Naive thymus-derived CD4-positive, alpha-beta T cell (primary cell): ENCODE measurements at regions of chrX and their contacts with region 1.

Region 1: GRCh38 chrX:43958529-43958928 is 14.7 kb downstream of the NDP start:
- DNase-seq: peak in 7 of 9 donors; percentile 18 to 58 (median 36)
- ATAC-seq: peak; percentile 74
- H3K4me3 ChIP-seq: no peak overlapping the region
- H3K4me3 Mint-ChIP-seq: peak overlapping the region in 1 of 10 donors; percentile 44
- H3K27ac ChIP-seq: no peak overlapping the region
- H3K27ac Mint-ChIP-seq: peak overlapping the region in 3 of 9 donors; percentile 6 to 29 (median 24)
- H3K4me1 ChIP-seq: no peaks in the 10 kb centered on the region
- H3K4me1 Mint-ChIP-seq: peaks cover 0 to 6% (median 5%) of the 10 kb centered on the region in 7 donors
- H3K27me3 ChIP-seq: no peaks in the 10 kb centered on the region
- H3K27me3 Mint-ChIP-seq: peaks cover 0 to 5% (median 0%) of the 10 kb centered on the region in 5 donors

Region 2: DNA sequence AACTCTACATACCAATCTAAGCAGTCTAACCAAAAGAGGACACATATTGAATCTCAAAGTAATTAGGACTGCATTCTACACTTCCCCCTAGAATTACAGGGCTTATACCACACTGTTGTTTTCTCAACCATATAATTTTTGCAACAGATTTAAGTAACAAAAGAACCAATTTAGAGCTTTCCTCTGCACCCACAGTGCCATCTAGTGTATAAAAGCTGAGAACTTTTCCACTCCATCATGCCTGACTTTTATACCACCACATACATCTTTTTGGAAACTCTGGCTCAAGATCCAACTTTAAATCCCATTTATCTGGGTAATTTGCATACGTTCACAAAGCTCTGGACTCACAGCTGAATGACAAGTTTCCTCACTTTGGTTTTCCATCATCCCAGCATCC is 285.5 kb after region 1 on chrX:
- CTCF ChIA-PET with region 1: interaction called, 17 read pairs
- POLR2A ChIA-PET with region 1: interaction called, 4 read pairs
- intact Hi-C with region 1: loop called (anchors 1 kb)
- DNase-seq: peak in 6 of 9 donors; percentile 8 to 51 (median 40)
- ATAC-seq: peak; percentile 46
- H3K4me3 ChIP-seq: no peak overlapping the region
- H3K4me3 Mint-ChIP-seq: peak overlapping the region in 2 of 10 donors; percentile 0 to 6
- H3K27ac ChIP-seq: no peak overlapping the region
- H3K27ac Mint-ChIP-seq: peak overlapping the region in 8 of 9 donors; percentile 5 to 79 (median 52)
- H3K4me1 ChIP-seq: peaks cover 5 to 22% of the 10 kb centered on the region in 2 donors
- H3K4me1 Mint-ChIP-seq: peaks cover 10 to 46% (median 30%) of the 10 kb centered on the region in 7 donors
- H3K27me3 ChIP-seq: no peaks in the 10 kb centered on the region
- H3K27me3 Mint-ChIP-seq: no peaks in the 10 kb centered on the region

Region 3: GRCh38 chrX:44542567-44543325 is 584.2 kb after region 1 on chrX and contains the start of gene FUNDC1:
- CTCF ChIA-PET with region 1: no interaction called
- POLR2A ChIA-PET with region 1: no interaction called
- intact Hi-C with region 1: loop called (anchors 1 kb)
- DNase-seq: peak; percentile 75 to 93 (median 89)
- ATAC-seq: peak; percentile 98
- H3K4me3 ChIP-seq: peak within 1 kb of the TSS; percentile 79
- H3K4me3 Mint-ChIP-seq: peak within 1 kb of the TSS; percentile 89 to 97 (median 93)
- H3K27ac ChIP-seq: peak within 1 kb of the TSS; percentile 92
- H3K27ac Mint-ChIP-seq: peak within 1 kb of the TSS; percentile 86 to 97 (median 93)
- H3K4me1 ChIP-seq: peaks cover 5 to 12% of the 10 kb centered on the region in 2 donors
- H3K4me1 Mint-ChIP-seq: peaks cover 12 to 54% (median 37%) of the 10 kb centered on the region in 7 donors
- H3K27me3 ChIP-seq: no peaks in the 10 kb centered on the region
- H3K27me3 Mint-ChIP-seq: no peaks in the 10 kb centered on the region
- total RNA-seq, gene FUNDC1: 5.2 to 10.1 (median 9.8) TPM

Region 4: DNA sequence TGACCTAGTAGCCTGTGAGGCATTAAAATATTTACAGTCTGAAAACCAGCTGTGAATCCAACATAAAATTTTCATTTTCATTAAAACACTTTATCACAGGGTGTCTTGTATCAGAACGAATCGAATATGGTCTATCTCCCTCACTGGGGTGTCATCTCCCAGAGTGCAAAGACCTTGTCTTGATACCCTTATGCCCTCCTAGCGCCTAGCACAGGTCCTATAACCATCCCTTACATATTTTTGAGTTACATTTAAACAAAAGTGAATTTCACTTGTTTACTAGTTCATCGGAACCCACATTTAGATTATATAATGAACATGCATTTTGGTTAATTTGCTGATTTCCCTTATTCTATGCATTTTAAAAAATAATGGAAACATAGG is 1228.1 kb after region 1 on chrX:
- CTCF ChIA-PET with region 1: interaction called, 3 read pairs
- POLR2A ChIA-PET with region 1: no interaction called
- intact Hi-C with region 1: loop called in 1 of 2 experiments (anchors 1 kb)
- DNase-seq: peak in 2 of 9 donors; percentile 3 to 7
- ATAC-seq: no peak
- H3K4me3 ChIP-seq: peak overlapping the region; percentile 65
- H3K4me3 Mint-ChIP-seq: peak overlapping the region; percentile 79 to 91 (median 87)
- H3K27ac ChIP-seq: no peak overlapping the region
- H3K27ac Mint-ChIP-seq: peak overlapping the region in 6 of 9 donors; percentile 11 to 86 (median 78)
- H3K4me1 ChIP-seq: peaks cover 0 to 1% of the 10 kb centered on the region in 2 donors
- H3K4me1 Mint-ChIP-seq: peaks cover 12 to 32% (median 27%) of the 10 kb centered on the region in 7 donors
- H3K27me3 ChIP-seq: no peaks in the 10 kb centered on the region
- H3K27me3 Mint-ChIP-seq: no peaks in the 10 kb centered on the region

Region 5: GRCh38 chrX:45843518-45843917 is 1885.0 kb after region 1 on chrX:
- CTCF ChIA-PET with region 1: interaction called, 6 read pairs
- POLR2A ChIA-PET with region 1: no interaction called
- intact Hi-C with region 1: loop called in 1 of 2 experiments (anchors 2 kb)
- DNase-seq: peak in 4 of 9 donors; percentile 4 to 23 (median 16)
- ATAC-seq: no peak
- H3K4me3 ChIP-seq: no peak overlapping the region
- H3K4me3 Mint-ChIP-seq: peak overlapping the region in 1 of 10 donors; percentile 40
- H3K27ac ChIP-seq: no peak overlapping the region
- H3K27ac Mint-ChIP-seq: peak overlapping the region in 2 of 9 donors; percentile 10 to 51
- H3K4me1 ChIP-seq: no peaks in the 10 kb centered on the region
- H3K4me1 Mint-ChIP-seq: peaks cover 0 to 52% (median 9%) of the 10 kb centered on the region in 7 donors
- H3K27me3 ChIP-seq: no peaks in the 10 kb centered on the region
- H3K27me3 Mint-ChIP-seq: no peaks in the 10 kb centered on the region